HepG2 (cell line): ENCODE measurements at regions of chr9 and their contacts with region 1.

Region 1: DNA sequence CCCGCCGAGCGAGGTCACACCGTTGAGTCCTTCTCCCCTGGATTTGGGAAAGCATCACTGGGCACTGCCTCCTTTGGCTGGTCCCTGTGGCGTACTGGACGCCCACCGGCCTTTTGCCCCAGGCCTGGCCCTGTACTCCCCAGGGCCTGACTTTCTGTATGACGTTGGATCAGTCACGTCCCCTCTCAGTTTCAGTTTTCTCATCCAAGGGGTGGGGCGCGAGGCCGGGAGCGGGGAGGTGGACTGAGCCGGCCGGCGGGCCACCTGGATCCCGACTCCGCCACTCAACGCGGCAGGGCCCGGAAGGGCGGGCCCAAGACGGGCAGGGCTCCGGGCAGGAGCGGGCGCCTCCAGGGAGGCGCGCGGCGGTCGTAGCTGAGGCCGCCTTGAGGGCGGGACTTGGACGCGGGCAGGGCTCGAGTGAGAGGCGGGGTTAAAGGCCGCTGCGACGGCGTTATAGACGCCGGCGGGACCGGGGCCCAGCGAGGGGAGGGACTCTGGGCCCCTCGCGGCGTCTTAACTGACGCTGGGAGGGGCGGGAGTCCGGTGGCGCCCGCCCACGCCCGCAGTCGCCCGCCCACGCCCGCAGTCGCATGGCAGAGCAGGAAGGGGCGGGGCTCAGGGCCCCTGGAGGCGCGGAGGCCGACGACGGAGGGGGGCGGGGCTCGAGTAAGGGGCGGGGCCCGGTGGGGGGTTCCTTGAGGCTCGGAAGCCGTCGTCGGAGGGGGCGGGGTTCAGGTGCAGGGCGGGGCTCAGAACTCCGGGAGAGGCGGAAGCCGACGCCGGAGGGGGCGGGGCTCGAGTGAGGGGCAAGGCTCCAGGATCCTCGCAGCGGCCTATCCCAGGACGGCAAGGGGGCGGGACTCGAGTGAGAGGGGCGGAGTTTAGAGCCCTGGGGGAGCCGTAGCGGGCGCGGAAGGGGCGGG is 549 bp upstream of the CARD19 start:
- DNase-seq: peak; percentile 95
- ATAC-seq: peak; percentile 83
- H3K4me3 ChIP-seq: peak overlapping the region; percentile 80 to 91 (median 90)
- H3K27ac ChIP-seq: peak overlapping the region; percentile 73
- H3K4me1 ChIP-seq: peaks cover 71% of the 10 kb centered on the region
- H3K27me3 ChIP-seq: no peaks in the 10 kb centered on the region; a peak in 1 of 5 replicates
- CTCF ChIP-seq: no peak
- EP300 ChIP-seq: no peak; a peak in 2 of 4 replicates
- POLR2A ChIP-seq: peak in 1 of 2 experiments; percentile 36; a peak in 2 of 4 replicates
- RAD21 ChIP-seq: 0 out of 2 replicates have a peak, but pooled peaks have one; percentile 11

Region 2: DNA sequence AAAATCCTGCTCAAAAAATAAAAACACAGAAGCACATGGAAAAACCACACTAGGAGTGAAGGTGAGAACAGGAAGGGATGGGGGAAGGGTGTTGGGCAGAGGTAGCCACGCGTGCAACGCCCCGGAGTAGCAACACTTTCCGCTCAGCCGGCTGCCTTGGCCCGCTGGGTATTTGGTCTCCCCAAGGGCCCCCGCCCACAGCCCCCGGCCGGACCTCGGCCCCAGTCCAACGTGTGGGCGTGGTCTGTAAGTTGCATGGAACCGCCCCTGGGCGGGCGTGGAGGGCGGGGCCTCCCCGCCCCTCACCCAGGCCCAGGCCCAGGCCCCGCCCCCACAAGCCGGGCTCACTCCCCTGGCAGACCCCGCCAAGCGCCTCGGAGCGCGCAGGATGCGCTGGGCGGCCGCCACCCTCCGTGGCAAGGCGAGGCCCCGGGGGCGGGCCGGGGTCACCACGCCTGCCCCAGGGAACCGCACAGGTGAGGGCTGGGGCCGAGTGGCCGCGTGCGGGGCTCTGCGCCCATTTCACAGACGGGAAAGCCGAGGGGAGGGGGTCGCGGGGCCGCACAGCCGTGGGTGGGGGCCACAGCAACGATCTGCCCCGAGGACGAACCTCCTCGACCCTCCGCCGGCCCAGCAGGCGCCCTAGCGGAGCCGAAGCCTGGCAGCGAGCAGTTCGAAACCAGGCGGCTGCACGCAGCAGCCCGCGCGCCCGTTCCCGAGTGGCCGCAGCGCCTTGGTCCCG is 36.9 kb before region 1 on chr9 and contains the start of gene SUSD3:
- CTCF ChIA-PET with region 1: no interaction called
- POLR2A ChIA-PET with region 1: no interaction called
- in situ Hi-C with region 1: no loop called
- intact Hi-C with region 1: loop called (anchors 1 kb)
- DNase-seq: peak; percentile 54
- ATAC-seq: peak; percentile 33
- H3K4me3 ChIP-seq: peak within 1 kb of the TSS; percentile 28 to 64 (median 35); a peak in 5 of 6 replicates
- H3K27ac ChIP-seq: peak within 1 kb of the TSS; percentile 36
- H3K4me1 ChIP-seq: peaks cover 78% of the 10 kb centered on the region
- H3K27me3 ChIP-seq: peaks cover 8 to 16% of the 10 kb centered on the region in 2 experiments; a peak in 3 of 5 replicates
- CTCF ChIP-seq: no peak
- EP300 ChIP-seq: no peak
- POLR2A ChIP-seq: peak in 1 of 2 experiments; percentile 55; a peak in 2 of 4 replicates
- RAD21 ChIP-seq: no peak
- total RNA-seq, gene SUSD3: 6.0 and 7.0 TPM in 2 replicates

Region 3: GRCh38 chr9:93126825-93127368 is 31.4 kb after region 1 on chr9:
- CTCF ChIA-PET with region 1: no interaction called
- POLR2A ChIA-PET with region 1: interaction called, 10 read pairs
- in situ Hi-C with region 1: no loop called
- intact Hi-C with region 1: no loop called
- DNase-seq: peak; percentile 88
- ATAC-seq: peak; percentile 81
- H3K4me3 ChIP-seq: peak overlapping the region in 1 of 3 experiments; percentile 56; a peak in 2 of 6 replicates
- H3K27ac ChIP-seq: peak overlapping the region; percentile 92
- H3K4me1 ChIP-seq: peaks cover 61% of the 10 kb centered on the region
- H3K27me3 ChIP-seq: no peaks in the 10 kb centered on the region
- CTCF ChIP-seq: peak; percentile 19; the same call in 1 of the 2 replicates
- EP300 ChIP-seq: no peak; a peak in 1 of 4 replicates
- POLR2A ChIP-seq: peak in 1 of 2 experiments; percentile 49; a peak in 1 of 4 replicates
- RAD21 ChIP-seq: peak; percentile 41; the same call in 1 of the 2 replicates

Region 4: DNA sequence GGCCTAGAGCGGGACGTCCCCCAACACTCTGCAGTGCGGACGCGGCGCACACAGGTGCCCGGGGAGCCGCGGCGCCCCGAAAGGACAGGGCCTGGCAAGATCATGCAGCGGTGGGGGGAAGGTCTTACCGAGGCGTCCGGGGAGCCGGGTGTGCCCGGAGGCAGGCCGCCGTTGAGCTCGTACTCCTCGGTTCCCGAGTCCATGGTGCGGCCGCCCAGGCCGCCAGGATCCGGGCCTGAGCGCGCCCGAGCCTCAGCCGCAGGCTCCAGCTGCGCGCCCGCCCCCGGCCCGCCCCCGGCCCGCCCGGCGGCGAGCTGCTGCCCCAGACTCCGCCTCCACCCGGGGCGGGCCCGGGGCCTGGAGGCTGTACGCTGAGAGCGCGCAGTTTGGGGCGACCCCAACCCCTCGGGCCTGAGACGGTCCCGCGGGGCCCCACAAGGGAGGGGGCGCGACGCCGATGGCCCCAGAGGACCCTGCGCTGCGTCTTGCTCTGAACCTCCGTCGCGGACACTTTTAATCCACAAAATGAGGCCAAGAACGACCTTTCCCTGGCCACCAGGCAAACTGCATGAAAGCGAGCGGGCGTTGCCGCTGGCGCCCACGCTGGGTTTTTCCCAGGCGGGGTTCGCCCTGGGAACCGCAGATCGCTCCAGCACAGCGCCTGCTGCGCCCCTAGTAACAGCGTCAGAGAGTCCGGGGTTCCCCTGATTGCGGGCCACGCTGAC is 38.7 kb after region 1 on chr9 and contains the start of gene NINJ1:
- CTCF ChIA-PET with region 1: no interaction called
- POLR2A ChIA-PET with region 1: interaction called, 21 read pairs
- in situ Hi-C with region 1: no loop called
- intact Hi-C with region 1: no loop called
- DNase-seq: peak; percentile 40
- ATAC-seq: peak; percentile 81
- H3K4me3 ChIP-seq: peak within 1 kb of the TSS; percentile 85 to 96 (median 92)
- H3K27ac ChIP-seq: peak within 1 kb of the TSS; percentile 99
- H3K4me1 ChIP-seq: peaks cover 77% of the 10 kb centered on the region
- H3K27me3 ChIP-seq: peaks cover 1 to 6% of the 10 kb centered on the region in 2 experiments; a peak in 1 of 5 replicates
- CTCF ChIP-seq: peak; percentile 5; the same call in 1 of the 2 replicates
- EP300 ChIP-seq: no peak
- POLR2A ChIP-seq: peak in 1 of 2 experiments; percentile 95; a peak in 2 of 4 replicates
- RAD21 ChIP-seq: peak; percentile 42; the same call in 1 of the 2 replicates
- total RNA-seq, gene NINJ1: 77.1 and 92.1 TPM in 2 replicates